ENCODE measurements at regions of chr20 and their contacts with region 1.

Region 1: GRCh38 chr20:3204124-3204822 is at the start of gene DDRGK1:
- DNase-seq: peak; percentile 89 to 90
- ATAC-seq: peak; percentile 94 to 97 (median 95)
- H3K4me3 ChIP-seq: peak within 1 kb of the TSS; percentile 61 to 97 (median 74)
- H3K27ac ChIP-seq: peak within 1 kb of the TSS; percentile 70 to 95 (median 84)
- H3K4me1 ChIP-seq: peaks cover 3 to 25% (median 19%) of the 10 kb centered on the region in 9 donors
- H3K27me3 ChIP-seq: no peaks in the 10 kb centered on the region
- CTCF ChIP-seq: no peak
- total RNA-seq, gene DDRGK1: 25.2 to 48.4 (median 29.4) TPM

Region 2: DNA sequence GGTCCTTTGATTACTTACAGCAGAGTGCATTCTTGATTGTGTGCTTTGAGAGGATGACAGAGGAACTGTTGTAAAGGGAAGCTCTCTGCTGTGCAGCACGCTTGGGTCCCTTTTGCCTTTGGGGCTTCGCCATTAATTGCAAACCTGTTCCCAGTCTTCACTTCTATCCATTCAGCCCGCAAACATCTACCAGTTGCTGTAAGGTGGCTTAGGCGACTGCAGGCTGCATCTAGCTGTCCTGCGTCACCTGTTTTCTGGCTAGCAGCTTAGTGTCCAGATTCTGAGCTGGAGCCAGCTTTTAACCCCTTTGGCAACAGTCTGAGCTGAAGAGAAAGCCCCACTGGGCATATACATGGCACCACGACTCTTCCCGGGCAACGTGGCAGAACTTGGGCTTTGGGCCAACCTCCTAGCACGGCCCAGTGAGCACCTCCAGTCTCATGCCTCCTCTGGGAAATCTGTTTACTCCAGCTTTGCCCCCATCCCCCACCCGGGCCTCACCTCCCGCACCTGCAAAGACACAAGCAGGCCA is 42.1 kb before region 1 on chr20:
- intact Hi-C with region 1: loop called in 1 of 10 experiments (anchors 5 kb)
- DNase-seq: no peak
- ATAC-seq: no peak
- H3K4me3 ChIP-seq: no peak overlapping the region
- H3K27ac ChIP-seq: no peak overlapping the region
- H3K4me1 ChIP-seq: peaks cover 14 to 39% (median 31%) of the 10 kb centered on the region in 9 donors
- H3K27me3 ChIP-seq: peaks cover 0 to 9% (median 0%) of the 10 kb centered on the region in 7 donors
- CTCF ChIP-seq: no peak

Region 3: GRCh38 chr20:3371754-3372153 is 167.5 kb after region 1 on chr20:
- intact Hi-C with region 1: no loop called
- DNase-seq: no peak
- ATAC-seq: peak in 2 of 8 donors; percentile 31 to 44
- H3K4me3 ChIP-seq: no peak overlapping the region
- H3K27ac ChIP-seq: no peak overlapping the region
- H3K4me1 ChIP-seq: peaks cover 0 to 19% (median 12%) of the 10 kb centered on the region in 9 donors
- H3K27me3 ChIP-seq: no peaks in the 10 kb centered on the region
- CTCF ChIP-seq: no peak

Measured in heart right ventricle (tissue), 16 donors.